Mammary epithelial cell (primary cell): ENCODE measurements at regions of chr6 and their contacts with region 1.

Region 1: GRCh38 chr6:89562118-89562973 is 76.2 kb downstream of the LYRM2 start:
- DNase-seq: no peak
- H3K4me3 ChIP-seq: no peak overlapping the region
- H3K27ac ChIP-seq: no peak overlapping the region
- H3K4me1 ChIP-seq: no peaks in the 10 kb centered on the region
- H3K27me3 ChIP-seq: no peaks in the 10 kb centered on the region
- CTCF ChIP-seq: no peak

Region 2: DNA sequence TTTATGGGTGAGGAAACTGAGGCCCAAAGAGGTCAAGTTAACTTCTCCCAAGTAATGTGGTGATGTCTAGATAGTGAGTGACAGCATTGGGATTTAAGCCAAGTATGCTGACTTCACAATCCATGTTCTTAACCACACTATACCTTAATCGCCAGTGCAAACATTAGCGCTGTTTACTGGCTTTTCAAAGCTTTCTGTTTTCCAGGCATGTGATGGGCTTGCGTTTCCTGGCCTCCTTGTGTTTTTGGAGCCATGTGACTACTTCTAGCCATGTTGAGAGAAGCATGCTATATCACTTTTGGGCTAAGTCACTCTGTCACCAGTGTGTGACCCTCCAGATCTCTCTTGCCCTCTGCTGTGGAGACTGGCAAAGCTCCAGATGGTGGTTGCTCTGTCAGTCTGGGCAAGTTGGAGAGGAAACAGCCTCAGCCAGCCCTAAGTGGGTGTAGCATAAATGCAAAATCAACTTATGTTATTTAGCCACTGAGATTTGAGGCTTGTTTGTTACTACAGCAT is 52.5 kb before region 1 on chr6:
- CTCF ChIA-PET with region 1: no interaction called
- dilution Hi-C with region 1: loop called (anchors 5 kb)
- in situ Hi-C with region 1: no loop called
- intact Hi-C with region 1: no loop called
- DNase-seq: no peak
- H3K4me3 ChIP-seq: no peak overlapping the region
- H3K27ac ChIP-seq: no peak overlapping the region
- H3K4me1 ChIP-seq: no peaks in the 10 kb centered on the region
- H3K27me3 ChIP-seq: no peaks in the 10 kb centered on the region
- CTCF ChIP-seq: no peak

Region 3: GRCh38 chr6:89829591-89830385 is 267.4 kb after region 1 on chr6 and contains the start of gene CASP8AP2:
- CTCF ChIA-PET with region 1: no interaction called
- dilution Hi-C with region 1: no loop called
- in situ Hi-C with region 1: no loop called
- intact Hi-C with region 1: no loop called
- DNase-seq: peak; percentile 99
- H3K4me3 ChIP-seq: peak within 1 kb of the TSS; percentile 80 to 95 (median 81)
- H3K27ac ChIP-seq: peak within 1 kb of the TSS; percentile 75
- H3K4me1 ChIP-seq: no peaks in the 10 kb centered on the region
- H3K27me3 ChIP-seq: no peaks in the 10 kb centered on the region
- CTCF ChIP-seq: no peak
- total RNA-seq, gene CASP8AP2: 10.8 to 14.2 TPM